Mammary epithelial cell (primary cell): ENCODE measurements at regions of chr3 and their contacts with region 1.

Region 1: GRCh38 chr3:53130179-53131061 is at the start of gene RFT1:
- DNase-seq: peak; percentile 93
- H3K4me3 ChIP-seq: peak within 1 kb of the TSS; percentile 77 to 89 (median 77)
- H3K27ac ChIP-seq: peak within 1 kb of the TSS; percentile 75
- H3K4me1 ChIP-seq: peaks cover 30% of the 10 kb centered on the region
- H3K27me3 ChIP-seq: no peaks in the 10 kb centered on the region
- CTCF ChIP-seq: peak; percentile 8 to 21
- total RNA-seq, gene RFT1: 15.2 to 29.3 TPM

Region 2: GRCh38 chr3:52931889-52932288 is 198.5 kb before region 1 on chr3:
- CTCF ChIA-PET with region 1: no interaction called
- dilution Hi-C with region 1: no loop called
- in situ Hi-C with region 1: no loop called
- intact Hi-C with region 1: no loop called
- DNase-seq: no peak
- H3K4me3 ChIP-seq: no peak overlapping the region
- H3K27ac ChIP-seq: no peak overlapping the region
- H3K4me1 ChIP-seq: no peaks in the 10 kb centered on the region
- H3K27me3 ChIP-seq: no peaks in the 10 kb centered on the region
- CTCF ChIP-seq: peak in 1 of 2 donors; percentile 9

Region 3: GRCh38 chr3:53072653-53073552 is 57.5 kb before region 1 on chr3:
- CTCF ChIA-PET with region 1: no interaction called
- dilution Hi-C with region 1: no loop called
- in situ Hi-C with region 1: no loop called
- intact Hi-C with region 1: no loop called
- DNase-seq: peak; percentile 59
- H3K4me3 ChIP-seq: peak overlapping the region; percentile 44 to 67 (median 62)
- H3K27ac ChIP-seq: no peak overlapping the region
- H3K4me1 ChIP-seq: peaks cover 19% of the 10 kb centered on the region
- H3K27me3 ChIP-seq: no peaks in the 10 kb centered on the region
- CTCF ChIP-seq: peak; percentile 79 to 94

Region 4: DNA sequence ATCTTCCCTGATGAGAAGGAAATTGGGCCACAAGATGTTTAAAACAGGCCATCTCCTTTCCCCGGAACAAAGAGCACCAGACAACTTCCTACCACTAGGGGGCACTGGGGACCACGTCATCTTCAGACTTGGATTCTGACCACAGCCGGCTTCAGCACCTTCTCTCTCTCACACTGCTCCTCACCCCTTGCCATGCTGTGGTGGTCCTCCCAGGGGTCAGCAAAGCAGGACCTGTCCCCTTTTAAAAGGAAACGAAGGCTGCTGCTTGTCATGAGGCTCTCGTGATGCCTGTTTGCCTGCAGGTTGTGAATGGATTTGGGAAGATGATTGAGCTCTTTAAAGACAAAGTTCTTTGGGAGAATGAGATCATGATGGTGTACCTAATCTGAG is 16.4 kb before region 1 on chr3:
- CTCF ChIA-PET with region 1: interaction called, 4 read pairs
- dilution Hi-C with region 1: no loop called
- in situ Hi-C with region 1: no loop called
- intact Hi-C with region 1: loop called (anchors 1 kb)
- DNase-seq: peak; percentile 76
- H3K4me3 ChIP-seq: no peak overlapping the region
- H3K27ac ChIP-seq: peak overlapping the region; percentile 50
- H3K4me1 ChIP-seq: peaks cover 41% of the 10 kb centered on the region
- H3K27me3 ChIP-seq: no peaks in the 10 kb centered on the region
- CTCF ChIP-seq: peak; percentile 85 to 92

Region 5: DNA sequence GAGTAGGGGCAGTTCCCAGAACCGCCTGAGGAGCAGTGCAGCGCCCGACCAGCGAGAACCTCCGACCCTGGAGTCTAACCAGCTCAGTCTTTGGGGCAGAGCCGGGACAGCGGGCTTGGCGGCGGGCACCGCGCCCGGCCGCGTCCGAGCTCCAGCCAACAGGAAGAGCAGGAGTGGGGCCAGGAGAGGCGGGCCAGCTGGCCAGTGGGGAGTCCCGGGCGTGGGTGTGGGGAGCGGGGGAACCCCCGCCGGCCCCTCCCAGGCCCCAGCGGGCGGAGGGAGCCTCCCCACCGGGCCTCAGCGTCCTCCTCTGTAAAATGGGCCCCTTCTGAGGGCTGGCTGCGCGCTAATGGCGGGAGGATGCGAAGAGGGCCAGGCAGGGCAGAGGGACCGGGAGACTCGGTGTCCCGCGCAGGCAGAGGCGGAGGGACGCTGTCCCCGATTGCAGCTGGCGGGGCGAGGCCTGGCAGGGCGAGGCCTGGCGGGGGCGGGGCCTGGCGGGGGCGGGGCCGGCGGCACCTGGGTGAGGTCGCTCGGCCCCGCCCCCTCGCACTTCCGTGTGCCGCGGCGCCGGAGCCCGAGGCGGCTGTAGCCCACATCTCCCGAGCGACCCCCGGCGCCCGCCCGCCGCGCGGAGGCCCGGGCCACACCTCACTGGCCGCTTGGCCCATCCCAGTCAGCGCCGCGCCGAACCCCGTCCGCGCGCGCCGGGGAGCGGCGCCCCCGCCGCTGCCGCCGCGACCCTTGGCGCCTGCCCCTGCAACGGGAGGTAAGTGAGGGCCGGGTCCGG is 30.4 kb after region 1 on chr3 and contains the start of gene PRKCD:
- CTCF ChIA-PET with region 1: no interaction called
- dilution Hi-C with region 1: no loop called
- in situ Hi-C with region 1: no loop called
- intact Hi-C with region 1: loop called (anchors 1 kb)
- DNase-seq: peak; percentile 86
- H3K4me3 ChIP-seq: peak within 1 kb of the TSS; percentile 75 to 95 (median 86)
- H3K27ac ChIP-seq: peak within 1 kb of the TSS; percentile 52
- H3K4me1 ChIP-seq: peaks cover 45% of the 10 kb centered on the region
- H3K27me3 ChIP-seq: no peaks in the 10 kb centered on the region
- CTCF ChIP-seq: peak; percentile 17 to 43
- total RNA-seq, gene PRKCD: 6.2 to 37.2 TPM

Region 6: GRCh38 chr3:53195602-53196574 is 65.5 kb after region 1 on chr3:
- CTCF ChIA-PET with region 1: interaction called, 12 read pairs
- dilution Hi-C with region 1: no loop called
- in situ Hi-C with region 1: loop called (anchors 5 kb)
- intact Hi-C with region 1: loop called (anchors 1 kb)
- DNase-seq: peak; percentile 16
- H3K4me3 ChIP-seq: no peak overlapping the region
- H3K27ac ChIP-seq: no peak overlapping the region
- H3K4me1 ChIP-seq: peaks cover 11% of the 10 kb centered on the region
- H3K27me3 ChIP-seq: no peaks in the 10 kb centered on the region
- CTCF ChIP-seq: peak; percentile 70 to 99

Region 7: DNA sequence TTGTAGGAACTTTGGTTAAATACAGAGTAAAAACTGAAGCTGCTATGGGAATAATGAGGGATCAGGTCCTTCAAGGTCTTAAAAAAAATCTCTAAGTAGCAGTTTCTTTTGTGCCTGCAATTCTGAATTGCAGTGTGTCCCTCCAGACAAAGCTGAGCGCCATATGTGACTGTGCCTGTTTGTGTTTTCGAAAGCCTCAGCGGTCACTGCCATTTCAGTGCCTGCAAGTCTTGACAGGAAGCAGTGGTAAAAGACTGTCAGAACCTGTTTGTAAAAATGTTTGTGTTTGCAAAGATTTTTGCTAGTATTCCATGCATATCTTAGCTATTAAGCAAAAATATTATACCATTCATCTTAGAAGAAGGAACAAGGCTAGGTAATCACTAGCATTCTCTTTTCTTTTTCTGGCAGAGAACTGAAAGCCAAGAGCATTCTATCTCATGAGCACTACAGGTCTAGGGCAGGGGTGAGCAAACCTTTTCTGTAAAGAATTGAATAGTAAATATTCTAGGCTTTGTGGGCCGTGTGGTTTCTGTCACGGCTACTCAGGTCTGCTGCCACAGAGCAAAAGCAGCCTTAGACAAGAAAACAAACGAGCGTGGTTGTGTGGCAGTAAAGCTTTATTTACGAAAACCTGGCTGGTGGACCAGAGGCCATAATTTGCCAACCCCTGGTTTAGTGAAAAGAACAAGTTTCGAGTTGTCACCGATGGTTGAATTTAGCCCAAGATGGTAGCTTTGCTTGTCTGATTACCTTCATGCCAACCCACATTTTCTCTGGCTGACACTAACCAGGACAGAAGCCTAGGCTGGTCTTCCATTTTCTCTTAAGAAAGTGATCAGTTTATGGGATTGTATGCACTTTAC is 498.3 kb after region 1 on chr3:
- CTCF ChIA-PET with region 1: no interaction called
- dilution Hi-C with region 1: no loop called
- in situ Hi-C with region 1: no loop called
- intact Hi-C with region 1: no loop called
- DNase-seq: peak; percentile 60
- H3K4me3 ChIP-seq: no peak overlapping the region
- H3K27ac ChIP-seq: no peak overlapping the region
- H3K4me1 ChIP-seq: peaks cover 17% of the 10 kb centered on the region
- H3K27me3 ChIP-seq: peaks cover 3% of the 10 kb centered on the region
- CTCF ChIP-seq: no peak